GM10248 (cell line): ENCODE measurements at regions of chr1 and their contacts with region 1.

Region 1: GRCh38 chr1:206784471-206784903 is 12.2 kb upstream of the IL10 start:
- DNase-seq: peak; percentile 76
- CTCF ChIP-seq: no peak

Region 2: GRCh38 chr1:206766251-206766856 is 18.1 kb before region 1 on chr1:
- CTCF ChIA-PET with region 1: interaction called, 132 read pairs
- POLR2A ChIA-PET with region 1: no interaction called
- DNase-seq: peak; percentile 57
- CTCF ChIP-seq: no peak

Region 3: DNA sequence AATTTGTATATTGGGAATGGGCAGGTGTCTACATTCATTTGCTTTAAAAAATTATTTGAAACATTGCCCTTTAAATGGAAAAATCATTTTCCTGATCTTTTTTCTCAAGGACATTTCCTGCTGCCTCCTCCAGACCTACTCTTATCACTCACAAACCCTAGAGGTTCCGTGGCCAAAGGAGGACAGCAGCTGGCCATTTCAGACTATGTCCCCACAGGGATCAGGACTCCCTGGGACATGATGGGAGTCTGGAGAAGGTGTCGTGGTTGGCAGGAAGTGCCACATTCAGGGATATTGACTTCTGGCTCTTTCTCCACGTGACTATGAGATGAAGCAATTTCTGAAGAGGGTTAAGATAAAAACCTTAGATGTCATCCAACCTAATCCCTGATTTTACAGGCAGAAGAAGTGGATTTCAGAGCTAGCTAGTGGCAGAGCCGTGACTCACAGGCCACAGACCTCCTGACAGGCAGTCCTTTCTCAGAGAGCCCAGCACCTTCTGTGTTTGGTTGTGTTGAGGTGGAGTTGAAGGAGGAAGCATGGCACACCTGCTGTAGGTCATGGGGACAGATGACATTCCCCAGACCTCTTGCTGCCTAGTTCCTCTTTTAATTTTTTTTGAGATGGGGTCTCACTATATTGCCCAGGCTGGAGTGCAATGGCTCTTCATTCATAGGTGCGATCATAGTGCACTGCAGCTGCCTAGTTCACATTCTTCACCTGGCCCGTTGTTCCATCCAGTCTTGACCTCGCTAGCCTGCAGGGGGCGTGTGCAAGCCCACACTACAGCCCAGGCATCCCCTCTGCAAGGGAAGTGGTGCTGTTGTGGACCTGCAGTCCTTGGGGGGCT is 13.3 kb after region 1 on chr1:
- CTCF ChIA-PET with region 1: interaction called, 288 read pairs
- POLR2A ChIA-PET with region 1: no interaction called
- DNase-seq: no peak
- CTCF ChIP-seq: peak; percentile 54

Region 4: GRCh38 chr1:206859082-206859521 is 74.6 kb after region 1 on chr1:
- CTCF ChIA-PET with region 1: no interaction called
- POLR2A ChIA-PET with region 1: no interaction called
- DNase-seq: no peak
- CTCF ChIP-seq: no peak